ENCODE measurements at regions of chr1 and their contacts with region 1.

Region 1: GRCh38 chr1:181142096-181142958 is 53.8 kb downstream of the IER5 start:
- DNase-seq: peak; percentile 89
- H3K4me3 ChIP-seq: peak overlapping the region; percentile 12
- H3K27ac ChIP-seq: no peak overlapping the region
- H3K4me1 ChIP-seq: no peaks in the 10 kb centered on the region
- H3K27me3 ChIP-seq: no peaks in the 10 kb centered on the region
- CTCF ChIP-seq: peak; percentile 99

Region 2: DNA sequence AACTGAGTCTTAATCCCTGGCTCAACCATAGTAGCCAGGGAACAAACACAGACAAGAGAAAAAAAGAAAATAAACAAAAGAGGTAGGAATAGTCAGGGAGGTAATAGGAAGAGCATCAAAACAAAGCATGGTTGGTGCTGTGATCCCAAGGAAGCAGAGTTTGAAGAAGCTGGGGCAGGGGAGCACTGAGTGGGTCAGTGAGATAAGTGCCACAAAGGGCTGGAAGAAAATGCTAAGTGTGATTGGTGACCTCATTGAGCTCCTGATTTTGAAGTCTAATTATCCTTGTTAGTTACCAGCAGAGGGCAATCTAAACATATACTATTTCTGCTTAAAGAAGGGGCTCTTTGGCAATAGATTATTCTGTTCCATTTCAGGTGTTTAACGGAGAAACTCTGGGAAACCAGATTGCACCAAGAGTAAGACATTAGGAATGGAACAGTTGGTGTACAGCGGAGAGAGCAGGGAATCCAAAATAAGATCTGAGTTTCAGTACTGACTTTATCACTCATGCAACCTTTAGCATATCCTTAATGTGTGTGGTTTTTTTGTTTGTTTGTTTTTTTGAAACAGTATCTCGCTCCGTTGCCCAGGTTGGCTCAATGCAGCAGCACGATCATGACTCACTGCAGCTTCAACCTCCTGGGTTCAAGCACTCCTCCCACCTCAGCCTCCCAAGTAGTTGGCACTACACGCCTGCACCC is 260.4 kb before region 1 on chr1:
- intact Hi-C with region 1: loop called (anchors 5 kb)
- DNase-seq: no peak
- H3K4me3 ChIP-seq: no peak overlapping the region
- H3K27ac ChIP-seq: no peak overlapping the region
- H3K4me1 ChIP-seq: no peaks in the 10 kb centered on the region
- H3K27me3 ChIP-seq: no peaks in the 10 kb centered on the region
- CTCF ChIP-seq: peak; percentile 26

Region 3: GRCh38 chr1:180954005-180954800 is 188.1 kb before region 1 on chr1:
- intact Hi-C with region 1: loop called (anchors 10 kb)
- DNase-seq: peak; percentile 79
- H3K4me3 ChIP-seq: peak overlapping the region; percentile 67
- H3K27ac ChIP-seq: peak overlapping the region; percentile 23
- H3K4me1 ChIP-seq: no peaks in the 10 kb centered on the region
- H3K27me3 ChIP-seq: no peaks in the 10 kb centered on the region
- CTCF ChIP-seq: no peak

Region 4: GRCh38 chr1:181038399-181038873 is 103.9 kb before region 1 on chr1:
- intact Hi-C with region 1: loop called (anchors 5 kb)
- DNase-seq: peak; percentile 72
- H3K4me3 ChIP-seq: no peak overlapping the region
- H3K27ac ChIP-seq: no peak overlapping the region
- H3K4me1 ChIP-seq: no peaks in the 10 kb centered on the region
- H3K27me3 ChIP-seq: no peaks in the 10 kb centered on the region
- CTCF ChIP-seq: peak; percentile 61

Region 5: DNA sequence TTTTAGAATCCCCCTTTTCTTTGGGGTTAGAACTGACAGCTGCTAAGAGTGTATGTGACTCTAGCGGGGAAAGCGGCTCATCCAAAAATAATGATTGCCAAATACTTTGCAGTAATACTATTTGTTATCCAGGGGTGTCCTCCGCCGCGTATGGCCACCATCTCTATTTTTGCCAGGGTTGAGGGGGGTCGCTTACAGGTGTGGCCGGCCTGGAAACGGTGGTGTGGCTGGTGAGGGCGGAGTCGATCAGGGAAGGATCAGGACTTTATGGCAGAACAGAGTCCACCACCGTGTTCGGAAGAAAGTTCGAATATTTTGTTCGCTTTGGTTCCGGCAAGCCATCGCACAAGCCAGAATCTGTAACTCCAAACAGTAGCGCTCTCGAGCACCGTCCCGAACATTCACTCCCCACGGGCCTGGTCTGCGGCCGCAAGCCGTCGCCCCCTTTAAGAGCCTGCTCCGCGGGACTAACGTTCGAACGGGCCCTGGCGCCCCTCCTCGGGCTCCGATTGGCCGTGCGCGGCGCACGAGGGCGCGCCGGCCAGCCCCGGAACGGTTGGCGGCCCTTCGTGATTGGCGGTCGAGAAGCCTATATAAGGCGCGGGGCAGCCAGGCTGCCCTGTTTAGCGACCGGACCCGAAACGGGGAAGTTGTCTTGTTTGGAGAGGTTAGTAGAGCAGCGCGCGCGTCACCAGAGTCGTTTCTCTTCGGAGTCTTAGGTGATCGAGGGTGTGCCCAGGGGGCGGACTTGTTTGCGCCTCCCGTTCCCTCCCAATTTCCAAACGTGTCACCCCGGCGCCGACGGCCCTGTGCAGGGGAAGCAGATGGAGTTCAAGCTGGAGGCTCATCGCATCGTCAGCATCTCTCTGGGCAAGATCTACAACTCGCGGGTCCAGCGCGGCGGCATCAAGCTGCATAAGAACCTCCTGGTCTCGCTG is 54.0 kb before region 1 on chr1 and contains the start of gene IER5:
- intact Hi-C with region 1: loop called (anchors 2 kb)
- DNase-seq: peak; percentile 99
- H3K4me3 ChIP-seq: peak within 1 kb of the TSS; percentile 60
- H3K27ac ChIP-seq: peak within 1 kb of the TSS; percentile 96
- H3K4me1 ChIP-seq: peaks cover 4% of the 10 kb centered on the region
- H3K27me3 ChIP-seq: no peaks in the 10 kb centered on the region
- CTCF ChIP-seq: no peak
- total RNA-seq, gene IER5: 19.6 to 20.1 TPM

Measured in colonic mucosa (tissue), 4 donors.